T-cell (primary cell): ENCODE measurements at regions of chr2 and their contacts with region 1.

Region 1: GRCh38 chr2:215843579-215843978 is 169.8 kb downstream of the MREG start:
- DNase-seq: no peak
- ATAC-seq: no peak
- H3K4me3 ChIP-seq: no peak overlapping the region
- H3K4me3 Mint-ChIP-seq: no peak overlapping the region
- H3K27ac ChIP-seq: no peak overlapping the region
- H3K27ac Mint-ChIP-seq: no peak overlapping the region
- H3K4me1 ChIP-seq: no peaks in the 10 kb centered on the region
- H3K4me1 Mint-ChIP-seq: no peaks in the 10 kb centered on the region
- H3K27me3 ChIP-seq: peaks cover 0 to 8% of the 10 kb centered on the region in 2 experiments
- H3K27me3 Mint-ChIP-seq: peaks cover 0 to 4% of the 10 kb centered on the region in 2 donors

Region 2: DNA sequence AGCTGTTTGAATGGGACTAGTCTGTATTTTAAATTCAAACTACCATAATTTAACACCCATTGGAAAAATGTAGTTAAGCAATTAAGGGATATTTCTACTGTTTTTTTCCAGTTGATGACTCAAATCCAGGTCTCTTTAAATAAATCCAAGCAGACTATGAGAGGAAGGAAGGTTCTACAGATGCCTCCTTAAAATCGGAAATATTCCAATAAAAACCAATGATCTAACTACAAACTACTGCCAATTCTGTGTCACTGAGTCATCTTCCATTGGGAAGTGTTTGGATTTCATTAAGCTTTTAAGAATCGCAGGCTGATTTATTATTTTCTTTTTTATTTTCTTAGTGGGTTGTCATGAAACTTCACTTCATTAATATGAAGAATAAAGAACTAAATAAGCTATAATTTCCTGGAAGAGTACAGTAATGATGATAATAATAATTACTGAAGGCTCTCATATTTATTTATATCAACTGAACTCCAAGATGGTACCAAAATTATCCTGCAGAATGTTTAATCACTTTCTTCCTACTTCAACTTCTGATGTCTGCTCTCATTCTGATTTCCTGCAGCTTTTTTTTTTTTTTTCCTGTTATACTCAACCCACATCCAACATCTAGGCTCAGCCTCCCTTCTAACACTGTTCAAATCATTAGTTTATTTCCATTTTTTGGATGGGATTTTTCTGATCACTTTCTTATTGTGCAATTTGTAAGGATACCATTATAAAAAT is 241.4 kb before region 1 on chr2:
- CTCF ChIA-PET with region 1: no interaction called
- POLR2A ChIA-PET with region 1: interaction called in 1 of 2 experiments, 10 read pairs
- DNase-seq: no peak
- ATAC-seq: no peak
- H3K4me3 ChIP-seq: no peak overlapping the region
- H3K4me3 Mint-ChIP-seq: no peak overlapping the region
- H3K27ac ChIP-seq: no peak overlapping the region
- H3K27ac Mint-ChIP-seq: no peak overlapping the region
- H3K4me1 ChIP-seq: no peaks in the 10 kb centered on the region
- H3K4me1 Mint-ChIP-seq: no peaks in the 10 kb centered on the region
- H3K27me3 ChIP-seq: no peaks in the 10 kb centered on the region
- H3K27me3 Mint-ChIP-seq: no peaks in the 10 kb centered on the region